SK-N-SH (cell line): ENCODE measurements at regions of chr2 and their contacts with region 1.

Region 1: DNA sequence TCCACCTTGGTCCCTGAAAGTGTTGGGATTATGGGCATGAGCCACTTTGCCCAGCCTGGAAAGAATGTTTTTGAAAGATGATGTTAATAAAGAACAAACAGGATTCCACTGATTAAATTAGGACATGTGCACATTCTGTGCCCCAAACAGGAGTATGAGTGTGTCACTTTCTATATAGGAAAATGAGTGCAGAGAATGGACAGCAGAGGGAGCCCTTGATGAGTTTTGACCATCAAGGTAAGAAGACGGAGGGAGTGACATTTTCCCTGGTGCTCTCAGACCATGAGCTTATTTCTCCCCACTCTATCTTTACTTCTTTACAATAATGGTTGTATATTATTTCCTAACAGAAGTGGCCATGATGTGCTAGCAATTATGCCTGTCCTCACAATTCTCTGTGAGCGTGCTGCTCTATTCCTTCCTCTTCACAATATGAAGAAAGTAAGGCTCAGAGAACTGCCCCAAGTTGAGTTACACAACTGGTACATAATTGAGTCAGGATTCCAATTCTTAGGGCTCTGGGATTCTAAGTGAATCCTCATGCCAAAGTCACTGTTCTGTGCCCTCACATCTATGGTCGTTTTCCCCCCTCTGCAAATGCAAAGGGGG is 20.6 kb downstream of the RPL37A start:
- DNase-seq: peak; percentile 64
- H3K4me3 ChIP-seq: no peak overlapping the region; a peak in 1 of 4 replicates
- H3K27ac ChIP-seq: no peak overlapping the region
- H3K4me1 ChIP-seq: peaks cover 0 to 5% of the 10 kb centered on the region in 2 experiments; a peak in 2 of 4 replicates
- H3K27me3 ChIP-seq: no peaks in the 10 kb centered on the region
- CTCF ChIP-seq: peak; percentile 85
- EP300 ChIP-seq: no peak
- RAD21 ChIP-seq: peak; percentile 91

Region 2: GRCh38 chr2:216507220-216508160 is 11.8 kb before region 1 on chr2:
- CTCF ChIA-PET with region 1: interaction called, 24 read pairs
- POLR2A ChIA-PET with region 1: no interaction called
- DNase-seq: no peak
- H3K4me3 ChIP-seq: no peak overlapping the region
- H3K27ac ChIP-seq: no peak overlapping the region; a peak in 1 of 4 replicates
- H3K4me1 ChIP-seq: peaks cover 7 to 14% of the 10 kb centered on the region in 2 experiments; a peak in 2 of 4 replicates
- H3K27me3 ChIP-seq: no peaks in the 10 kb centered on the region
- CTCF ChIP-seq: no peak
- EP300 ChIP-seq: no peak
- RAD21 ChIP-seq: no peak

Region 3: DNA sequence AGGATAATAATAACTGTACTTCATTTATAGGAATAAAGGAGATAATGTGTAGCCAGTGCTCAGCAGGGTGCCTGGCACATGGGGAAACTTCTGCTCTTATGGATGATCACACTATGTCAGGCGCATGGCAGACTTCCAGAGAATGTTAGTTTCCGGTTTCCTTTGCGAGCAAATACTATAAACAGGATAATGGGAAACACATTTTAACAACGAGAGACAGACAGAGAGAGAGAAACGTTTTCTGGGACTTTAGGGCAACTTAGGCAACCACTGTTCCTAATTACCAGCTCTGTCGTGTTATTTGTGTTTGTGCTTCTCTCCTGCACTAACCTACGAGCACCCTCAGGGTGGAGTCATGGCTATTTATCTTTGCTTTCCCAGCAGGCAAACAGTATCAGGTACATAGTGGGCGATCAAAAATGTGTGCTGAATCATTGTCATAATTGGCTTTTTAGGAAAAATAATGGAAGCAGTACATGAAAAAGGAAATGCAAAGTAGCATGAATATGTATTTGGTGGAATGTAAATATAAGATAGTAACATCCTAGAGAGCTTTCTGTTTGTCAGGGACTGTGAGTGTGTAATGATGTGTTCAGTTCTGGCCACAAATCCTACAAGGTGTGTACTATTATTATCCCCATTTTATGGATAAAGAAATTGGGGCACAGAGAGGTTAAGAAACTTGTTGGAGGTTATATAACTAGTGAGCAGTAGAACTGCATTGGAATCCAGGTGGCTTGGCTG is 77.2 kb after region 1 on chr2:
- CTCF ChIA-PET with region 1: interaction called, 10 read pairs
- POLR2A ChIA-PET with region 1: no interaction called
- DNase-seq: peak; percentile 69
- H3K4me3 ChIP-seq: peak overlapping the region in 1 of 2 experiments; percentile 5; a peak in 1 of 4 replicates
- H3K27ac ChIP-seq: peak overlapping the region; percentile 61 to 95
- H3K4me1 ChIP-seq: peaks cover 21 to 27% of the 10 kb centered on the region in 2 experiments
- H3K27me3 ChIP-seq: no peaks in the 10 kb centered on the region
- CTCF ChIP-seq: no peak
- EP300 ChIP-seq: peak; percentile 60 to 79; a peak in 3 of 4 replicates
- RAD21 ChIP-seq: peak; percentile 27

Region 4: GRCh38 chr2:216632952-216633615 is 113.8 kb after region 1 on chr2 and contains the start of gene IGFBP2:
- CTCF ChIA-PET with region 1: interaction called, 82 read pairs
- POLR2A ChIA-PET with region 1: interaction called, 4 read pairs
- DNase-seq: peak; percentile 96
- H3K4me3 ChIP-seq: peak within 1 kb of the TSS; percentile 86 to 99
- H3K27ac ChIP-seq: peak within 1 kb of the TSS; percentile 67 to 87; a peak in 3 of 4 replicates
- H3K4me1 ChIP-seq: peaks cover 13 to 26% of the 10 kb centered on the region in 2 experiments; a peak in 2 of 4 replicates
- H3K27me3 ChIP-seq: no peaks in the 10 kb centered on the region
- CTCF ChIP-seq: no peak
- EP300 ChIP-seq: no peak
- RAD21 ChIP-seq: 0 out of 2 replicates have a peak, but pooled peaks have one; percentile 14
- polyA plus RNA-seq, gene IGFBP2: 668 and 695 TPM in 2 replicates

Region 5: DNA sequence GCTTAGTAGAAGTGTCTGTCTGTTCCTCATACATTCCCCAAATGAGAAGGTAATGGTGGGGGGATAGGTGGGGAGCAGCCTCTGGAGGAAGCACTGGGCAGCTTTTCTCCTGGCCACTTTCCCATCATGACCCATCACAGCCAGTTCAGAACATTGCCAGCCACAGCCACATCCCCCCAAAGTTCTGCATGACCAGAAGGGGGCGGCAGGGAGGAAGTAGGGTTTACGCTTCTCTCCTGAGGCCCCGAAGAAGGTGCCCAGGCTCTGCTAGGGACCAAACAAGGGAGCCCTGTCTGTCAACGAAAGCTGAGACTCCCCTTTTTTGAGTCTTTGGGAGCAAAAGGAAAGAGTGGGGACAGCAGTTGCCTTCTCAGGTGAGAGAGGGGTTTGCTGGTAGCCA is 168.4 kb after region 1 on chr2:
- CTCF ChIA-PET with region 1: interaction called, 16 read pairs
- POLR2A ChIA-PET with region 1: interaction called, 3 read pairs
- DNase-seq: no peak
- H3K4me3 ChIP-seq: no peak overlapping the region; a peak in 1 of 4 replicates
- H3K27ac ChIP-seq: no peak overlapping the region
- H3K4me1 ChIP-seq: peaks cover 12 to 29% of the 10 kb centered on the region in 2 experiments; a peak in 3 of 4 replicates
- H3K27me3 ChIP-seq: no peaks in the 10 kb centered on the region
- CTCF ChIP-seq: peak; percentile 53
- EP300 ChIP-seq: no peak
- RAD21 ChIP-seq: no peak

Region 6: GRCh38 chr2:217713395-217714286 is 1194.4 kb after region 1 on chr2:
- CTCF ChIA-PET with region 1: interaction called, 23 read pairs
- POLR2A ChIA-PET with region 1: no interaction called
- DNase-seq: peak; percentile 79
- H3K4me3 ChIP-seq: peak overlapping the region in 1 of 2 experiments; percentile 14; a peak in 1 of 4 replicates
- H3K27ac ChIP-seq: peak overlapping the region; percentile 22 to 46; a peak in 2 of 4 replicates
- H3K4me1 ChIP-seq: peaks cover 26 to 28% of the 10 kb centered on the region in 2 experiments; a peak in 3 of 4 replicates
- H3K27me3 ChIP-seq: no peaks in the 10 kb centered on the region
- CTCF ChIP-seq: peak; percentile 96
- EP300 ChIP-seq: peak in 1 of 2 experiments; percentile 32; a peak in 1 of 4 replicates
- RAD21 ChIP-seq: peak; percentile 98